ENCODE measurements at regions of chr21 and their contacts with region 1.

Region 1: GRCh38 chr21:39388038-39388810 is 39.3 kb upstream of the HMGN1 start:
- DNase-seq: peak; percentile 92
- H3K4me3 ChIP-seq: peak overlapping the region; percentile 44 to 76
- H3K27ac ChIP-seq: peak overlapping the region; percentile 19 to 67; a peak in 3 of 4 replicates
- H3K4me1 ChIP-seq: peaks cover 4 to 17% of the 10 kb centered on the region in 2 experiments; a peak in 3 of 4 replicates
- H3K27me3 ChIP-seq: no peaks in the 10 kb centered on the region
- CTCF ChIP-seq: peak; percentile 85
- EP300 ChIP-seq: no peak
- RAD21 ChIP-seq: peak; percentile 83

Region 2: DNA sequence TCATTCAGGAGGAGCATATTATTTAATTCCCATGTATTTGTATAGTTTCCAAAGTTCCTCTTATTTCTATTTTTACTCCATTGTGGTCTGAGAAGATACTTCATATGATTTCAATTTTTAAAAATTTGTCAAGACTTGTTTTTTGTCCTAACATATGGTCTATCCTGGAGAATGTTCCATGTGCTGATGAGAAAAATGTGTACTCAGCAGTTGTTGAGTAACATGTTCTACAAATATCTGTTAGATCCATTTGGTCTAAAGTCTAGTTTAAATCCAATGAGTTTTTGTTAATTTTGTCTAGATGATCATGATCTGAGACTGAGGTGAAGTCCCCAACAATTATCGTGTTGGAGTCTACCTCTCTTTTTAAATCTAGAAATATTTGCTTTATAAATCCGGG is 219.4 kb before region 1 on chr21:
- CTCF ChIA-PET with region 1: no interaction called
- POLR2A ChIA-PET with region 1: no interaction called
- DNase-seq: no peak
- H3K4me3 ChIP-seq: no peak overlapping the region
- H3K27ac ChIP-seq: no peak overlapping the region
- H3K4me1 ChIP-seq: no peaks in the 10 kb centered on the region
- H3K27me3 ChIP-seq: no peaks in the 10 kb centered on the region
- CTCF ChIP-seq: no peak
- EP300 ChIP-seq: no peak
- RAD21 ChIP-seq: no peak

Region 3: DNA sequence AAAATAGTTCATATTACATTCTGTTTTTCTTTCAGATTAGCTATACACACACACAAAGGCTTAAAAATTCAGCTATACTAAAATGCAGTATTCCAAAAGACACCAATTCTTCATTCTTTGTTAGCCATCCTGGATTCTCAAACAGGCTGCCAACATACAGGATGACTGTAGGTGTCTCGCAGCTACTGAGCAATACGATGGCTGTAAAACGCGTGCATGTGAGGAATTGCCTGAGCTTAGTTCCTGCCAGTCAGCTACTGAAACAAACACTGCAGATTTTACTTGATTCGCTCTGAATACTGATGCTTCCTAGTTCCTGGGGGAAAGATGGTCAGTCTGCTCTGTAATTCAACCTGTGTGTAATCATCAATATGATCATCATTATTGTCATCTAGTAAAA is 14.6 kb before region 1 on chr21:
- CTCF ChIA-PET with region 1: interaction called, 10 read pairs
- POLR2A ChIA-PET with region 1: no interaction called
- DNase-seq: peak; percentile 54
- H3K4me3 ChIP-seq: no peak overlapping the region
- H3K27ac ChIP-seq: no peak overlapping the region
- H3K4me1 ChIP-seq: no peaks in the 10 kb centered on the region
- H3K27me3 ChIP-seq: no peaks in the 10 kb centered on the region
- CTCF ChIP-seq: peak; percentile 50
- EP300 ChIP-seq: no peak
- RAD21 ChIP-seq: peak; percentile 67

Measured in SK-N-SH (cell line).